ENCODE measurements at regions of chr18 and their contacts with region 1.

Region 1: DNA sequence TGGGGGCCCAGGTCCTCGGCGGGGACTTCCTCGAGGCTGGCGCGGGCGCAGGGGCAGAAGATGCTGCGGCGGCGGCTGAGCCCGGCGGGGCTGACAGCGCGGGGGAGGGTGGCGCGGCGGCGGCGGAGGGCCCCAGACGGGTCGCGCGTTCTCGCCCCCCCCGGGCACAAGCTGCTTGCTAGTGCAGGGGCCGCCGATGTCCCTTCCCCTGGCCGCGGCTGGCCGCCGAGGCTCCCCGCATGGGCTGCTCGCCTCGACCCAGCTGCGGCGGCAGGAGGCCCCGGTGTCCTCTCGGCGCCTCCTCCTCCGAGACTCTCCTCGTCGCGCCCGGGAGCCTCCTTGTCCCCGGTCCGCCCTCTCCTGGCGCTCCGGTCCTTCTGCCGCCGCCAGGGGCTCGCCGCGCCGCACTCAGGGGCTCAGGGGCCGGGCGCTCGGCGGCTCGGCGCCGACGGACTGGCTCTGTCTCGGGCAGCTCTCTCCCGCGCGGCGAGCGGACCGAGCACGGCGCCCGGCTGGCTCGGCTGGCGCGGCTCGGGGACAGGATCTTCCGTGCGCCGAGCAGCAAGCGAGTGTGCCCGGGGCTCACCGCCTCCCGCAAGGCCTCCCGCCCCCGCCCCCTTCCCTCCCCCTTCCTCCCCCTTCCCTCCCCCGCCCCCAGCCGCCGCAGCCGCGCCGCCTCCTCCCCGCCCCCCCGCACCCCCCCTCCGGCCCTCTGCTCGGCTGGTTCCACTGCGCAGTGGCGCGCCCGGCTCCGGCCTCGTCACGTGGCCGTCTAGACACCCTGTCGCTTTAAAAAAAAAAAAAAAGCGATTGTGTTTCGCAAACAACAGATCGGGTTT is 902 bp upstream of the SMAD7 start:
- DNase-seq: peak; percentile 90
- H3K4me3 Mint-ChIP-seq: peak overlapping the region; percentile 91
- H3K27ac Mint-ChIP-seq: peak overlapping the region; percentile 95
- H3K4me1 Mint-ChIP-seq: peaks cover 42% of the 10 kb centered on the region
- H3K27me3 Mint-ChIP-seq: no peaks in the 10 kb centered on the region
- CTCF ChIP-seq: peak; percentile 9

Region 2: GRCh38 chr18:48675352-48675761 is 276.3 kb before region 1 on chr18:
- CTCF ChIA-PET with region 1: interaction called, 5 read pairs
- POLR2A ChIA-PET with region 1: no interaction called
- intact Hi-C with region 1: loop called (anchors 2 kb)
- DNase-seq: peak; percentile 81
- H3K4me3 Mint-ChIP-seq: no peak overlapping the region
- H3K27ac Mint-ChIP-seq: no peak overlapping the region
- H3K4me1 Mint-ChIP-seq: no peaks in the 10 kb centered on the region
- H3K27me3 Mint-ChIP-seq: no peaks in the 10 kb centered on the region
- CTCF ChIP-seq: peak; percentile 94

Region 3: GRCh38 chr18:48834413-48835031 is 117.1 kb before region 1 on chr18:
- CTCF ChIA-PET with region 1: interaction called, 3 read pairs
- POLR2A ChIA-PET with region 1: interaction called, 9 read pairs
- intact Hi-C with region 1: loop called (anchors 1 kb)
- DNase-seq: peak; percentile 96
- H3K4me3 Mint-ChIP-seq: peak overlapping the region; percentile 67
- H3K27ac Mint-ChIP-seq: peak overlapping the region; percentile 85
- H3K4me1 Mint-ChIP-seq: peaks cover 57% of the 10 kb centered on the region
- H3K27me3 Mint-ChIP-seq: no peaks in the 10 kb centered on the region
- CTCF ChIP-seq: no peak

Region 4: GRCh38 chr18:48939205-48940097 is 12.2 kb before region 1 on chr18:
- CTCF ChIA-PET with region 1: interaction called, 6 read pairs
- POLR2A ChIA-PET with region 1: interaction called, 16 read pairs
- intact Hi-C with region 1: no loop called
- DNase-seq: peak; percentile 32
- H3K4me3 Mint-ChIP-seq: peak overlapping the region; percentile 55
- H3K27ac Mint-ChIP-seq: peak overlapping the region; percentile 82
- H3K4me1 Mint-ChIP-seq: peaks cover 80% of the 10 kb centered on the region
- H3K27me3 Mint-ChIP-seq: no peaks in the 10 kb centered on the region
- CTCF ChIP-seq: no peak

Region 5: DNA sequence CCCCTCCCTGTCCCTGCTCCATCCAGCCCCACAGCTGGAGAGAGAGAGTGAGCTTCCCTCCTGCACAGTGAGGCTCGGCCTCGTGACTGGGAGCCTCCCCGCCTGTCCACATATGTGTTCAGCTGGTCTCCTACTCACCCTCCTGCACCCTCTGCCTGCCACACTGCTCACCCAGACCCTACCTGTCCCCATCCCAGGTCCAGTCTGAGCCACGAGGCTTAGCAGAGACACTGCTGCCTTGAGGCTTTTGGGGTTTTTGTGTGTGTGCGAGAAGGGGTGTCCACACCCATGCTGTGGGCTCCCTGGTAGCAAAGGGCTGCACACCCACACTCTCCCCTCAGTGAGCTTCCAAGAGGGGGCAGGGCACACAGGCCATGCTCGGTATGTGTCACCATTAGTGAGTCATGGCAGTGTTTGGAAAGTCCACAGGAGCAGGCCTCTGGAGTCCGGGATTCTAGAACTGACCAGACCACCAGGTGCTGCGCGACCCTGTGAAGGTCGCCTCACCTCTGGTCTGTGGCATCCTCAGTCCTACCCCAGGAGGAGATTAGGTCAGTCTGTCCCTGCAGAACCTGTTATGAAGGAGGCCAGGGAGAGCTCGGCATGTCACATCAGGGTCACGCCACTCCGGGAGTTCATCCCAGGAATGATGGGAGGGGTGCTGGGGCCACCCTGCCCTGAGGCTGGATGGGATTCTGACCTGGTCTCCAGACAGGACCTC is 39.0 kb after region 1 on chr18:
- CTCF ChIA-PET with region 1: interaction called, 4 read pairs
- POLR2A ChIA-PET with region 1: interaction called, 12 read pairs
- intact Hi-C with region 1: no loop called
- DNase-seq: peak; percentile 78
- H3K4me3 Mint-ChIP-seq: no peak overlapping the region
- H3K27ac Mint-ChIP-seq: no peak overlapping the region
- H3K4me1 Mint-ChIP-seq: peaks cover 32% of the 10 kb centered on the region
- H3K27me3 Mint-ChIP-seq: no peaks in the 10 kb centered on the region
- CTCF ChIP-seq: no peak

Region 6: DNA sequence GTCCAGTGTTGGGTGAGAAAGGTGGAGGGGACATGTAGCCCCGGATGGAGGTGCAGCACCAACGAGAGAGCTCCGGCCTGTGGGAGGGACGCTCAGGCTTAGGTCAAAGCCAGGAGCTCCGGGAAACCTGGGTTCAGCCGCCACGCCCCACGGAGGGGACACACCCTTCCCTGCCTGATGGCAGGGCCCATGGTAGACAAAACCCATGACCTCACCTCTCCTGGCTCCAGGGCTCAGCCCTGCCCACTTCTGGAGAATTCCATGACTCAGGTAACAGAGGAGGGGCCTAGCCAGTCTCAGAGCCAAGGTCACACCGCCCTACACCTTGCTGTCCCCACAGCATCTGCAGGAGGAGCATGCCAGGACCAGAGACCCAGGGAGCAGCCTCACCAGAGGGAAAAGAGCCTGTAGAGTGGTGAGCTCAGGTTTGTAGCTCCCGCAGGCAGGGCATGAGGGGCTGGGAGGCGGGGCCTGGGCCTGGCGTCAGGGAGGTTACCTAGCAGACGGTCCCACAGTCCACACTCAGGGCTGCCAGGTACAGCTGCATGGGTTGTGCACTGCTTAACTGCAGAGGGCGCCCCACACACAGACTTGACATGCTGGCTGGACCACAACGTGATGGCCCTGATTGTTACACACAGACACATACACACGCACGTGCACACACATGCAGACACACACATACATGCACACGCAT is 69.9 kb after region 1 on chr18:
- CTCF ChIA-PET with region 1: interaction called, 4 read pairs
- POLR2A ChIA-PET with region 1: interaction called, 8 read pairs
- intact Hi-C with region 1: loop called (anchors 2 kb)
- DNase-seq: peak; percentile 93
- H3K4me3 Mint-ChIP-seq: peak overlapping the region; percentile 40
- H3K27ac Mint-ChIP-seq: peak overlapping the region; percentile 73
- H3K4me1 Mint-ChIP-seq: peaks cover 19% of the 10 kb centered on the region
- H3K27me3 Mint-ChIP-seq: no peaks in the 10 kb centered on the region
- CTCF ChIP-seq: peak; percentile 23

Region 7: DNA sequence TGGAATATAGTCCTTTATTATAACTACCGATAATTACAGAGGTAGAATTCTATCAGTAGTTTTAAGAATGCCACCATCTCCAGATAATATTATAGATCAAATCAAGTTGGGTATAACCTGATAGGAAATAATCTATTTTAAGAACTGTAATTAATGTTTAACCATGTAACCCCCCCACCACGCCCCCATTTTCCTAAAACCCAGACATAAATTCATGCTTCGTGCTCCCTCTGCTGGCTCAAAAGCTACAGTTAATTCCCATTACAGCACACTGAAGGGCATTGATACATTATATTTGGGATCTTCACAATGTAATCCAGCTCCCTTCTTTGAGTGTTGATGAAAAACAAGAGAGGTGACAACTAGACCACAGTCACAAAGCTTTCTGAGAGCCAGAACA is 227.1 kb after region 1 on chr18:
- CTCF ChIA-PET with region 1: interaction called, 5 read pairs
- POLR2A ChIA-PET with region 1: interaction called, 7 read pairs
- intact Hi-C with region 1: loop called (anchors 1 kb)
- DNase-seq: peak; percentile 30
- H3K4me3 Mint-ChIP-seq: no peak overlapping the region
- H3K27ac Mint-ChIP-seq: no peak overlapping the region
- H3K4me1 Mint-ChIP-seq: peaks cover 12% of the 10 kb centered on the region
- H3K27me3 Mint-ChIP-seq: no peaks in the 10 kb centered on the region
- CTCF ChIP-seq: peak; percentile 62